Psoas muscle (tissue), 8 donors: ENCODE measurements at regions of chr2 and their contacts with region 1.

Region 1: GRCh38 chr2:5691975-5692529 is at the start of gene SOX11:
- DNase-seq: peak in 1 of 2 donors; percentile 44
- ATAC-seq: peak in 2 of 4 donors; percentile 32 to 63
- H3K4me3 ChIP-seq: peak within 1 kb of the TSS; percentile 52
- H3K27ac ChIP-seq: no peak within 1 kb of the TSS
- H3K4me1 ChIP-seq: peaks cover 7% of the 10 kb centered on the region
- H3K27me3 ChIP-seq: peaks cover 0 to 95% (median 43%) of the 10 kb centered on the region in 3 donors
- CTCF ChIP-seq: no peak
- total RNA-seq, gene SOX11: 0.02 to 0.43 (median 0.05) TPM

Region 2: DNA sequence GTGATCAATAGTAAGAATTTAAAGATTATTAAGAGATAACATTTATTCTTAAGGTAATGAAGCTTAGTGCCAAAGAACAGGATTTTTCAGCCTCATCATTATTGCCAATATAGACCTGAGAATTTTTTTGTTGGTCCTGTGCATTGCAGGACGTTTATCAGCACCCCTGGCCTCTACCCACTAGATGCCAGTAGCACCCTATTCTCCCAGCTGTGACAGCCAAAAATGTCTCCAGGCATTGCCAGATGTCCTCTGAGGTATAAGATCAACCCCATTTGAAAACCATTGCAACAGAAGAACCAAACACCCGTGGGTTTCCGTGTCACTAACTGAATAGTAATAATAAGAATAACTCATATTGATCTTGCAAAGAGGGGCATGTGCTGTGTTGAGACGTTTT is 699.8 kb before region 1 on chr2:
- intact Hi-C with region 1: loop called in 1 of 2 experiments (anchors 10 kb)
- DNase-seq: no peak
- ATAC-seq: peak in 3 of 4 donors; percentile 43 to 78 (median 61)
- H3K4me3 ChIP-seq: no peak overlapping the region
- H3K27ac ChIP-seq: no peak overlapping the region
- H3K4me1 ChIP-seq: no peaks in the 10 kb centered on the region
- H3K27me3 ChIP-seq: no peaks in the 10 kb centered on the region
- CTCF ChIP-seq: peak; percentile 47

Region 3: GRCh38 chr2:5561006-5561405 is 131.0 kb before region 1 on chr2:
- intact Hi-C with region 1: no loop called
- DNase-seq: peak in 1 of 2 donors; percentile 22
- ATAC-seq: peak in 3 of 4 donors; percentile 36 to 42 (median 39)
- H3K4me3 ChIP-seq: no peak overlapping the region
- H3K27ac ChIP-seq: no peak overlapping the region
- H3K4me1 ChIP-seq: no peaks in the 10 kb centered on the region
- H3K27me3 ChIP-seq: no peaks in the 10 kb centered on the region
- CTCF ChIP-seq: no peak